Activated CD4-positive, alpha-beta T cell treated with anti-CD3 and anti-CD28 coated beads for 36 hours (primary cell): ENCODE measurements at regions of chr9 and their contacts with region 1.

Region 1: GRCh38 chr9:36995927-36996705 is 38.0 kb downstream of the PAX5 start:
- DNase-seq: peak; percentile 79
- ATAC-seq: peak; percentile 75
- H3K4me3 Mint-ChIP-seq: no peak overlapping the region
- H3K27ac Mint-ChIP-seq: no peak overlapping the region
- H3K4me1 Mint-ChIP-seq: no peaks in the 10 kb centered on the region
- H3K27me3 Mint-ChIP-seq: peaks cover 15% of the 10 kb centered on the region

Region 2: GRCh38 chr9:37309136-37309535 is 313.0 kb after region 1 on chr9:
- CTCF ChIA-PET with region 1: interaction called, 5 read pairs
- POLR2A ChIA-PET with region 1: no interaction called
- intact Hi-C with region 1: loop called (anchors 1 to 5 kb)
- DNase-seq: peak; percentile 56
- ATAC-seq: peak; percentile 83
- H3K4me3 Mint-ChIP-seq: no peak overlapping the region
- H3K27ac Mint-ChIP-seq: peak overlapping the region; percentile 39
- H3K4me1 Mint-ChIP-seq: peaks cover 9% of the 10 kb centered on the region
- H3K27me3 Mint-ChIP-seq: no peaks in the 10 kb centered on the region

Region 3: GRCh38 chr9:37329576-37329975 is 333.5 kb after region 1 on chr9:
- CTCF ChIA-PET with region 1: interaction called, 12 read pairs
- POLR2A ChIA-PET with region 1: interaction called, 3 read pairs
- intact Hi-C with region 1: loop called (anchors 1 kb)
- DNase-seq: peak; percentile 14
- ATAC-seq: no peak
- H3K4me3 Mint-ChIP-seq: no peak overlapping the region
- H3K27ac Mint-ChIP-seq: no peak overlapping the region
- H3K4me1 Mint-ChIP-seq: no peaks in the 10 kb centered on the region
- H3K27me3 Mint-ChIP-seq: no peaks in the 10 kb centered on the region

Region 4: GRCh38 chr9:37364751-37365360 is 368.7 kb after region 1 on chr9:
- CTCF ChIA-PET with region 1: interaction called, 4 read pairs
- POLR2A ChIA-PET with region 1: no interaction called
- intact Hi-C with region 1: loop called (anchors 1 to 10 kb)
- DNase-seq: peak; percentile 56
- ATAC-seq: peak; percentile 73
- H3K4me3 Mint-ChIP-seq: no peak overlapping the region
- H3K27ac Mint-ChIP-seq: no peak overlapping the region
- H3K4me1 Mint-ChIP-seq: no peaks in the 10 kb centered on the region
- H3K27me3 Mint-ChIP-seq: no peaks in the 10 kb centered on the region

Region 5: DNA sequence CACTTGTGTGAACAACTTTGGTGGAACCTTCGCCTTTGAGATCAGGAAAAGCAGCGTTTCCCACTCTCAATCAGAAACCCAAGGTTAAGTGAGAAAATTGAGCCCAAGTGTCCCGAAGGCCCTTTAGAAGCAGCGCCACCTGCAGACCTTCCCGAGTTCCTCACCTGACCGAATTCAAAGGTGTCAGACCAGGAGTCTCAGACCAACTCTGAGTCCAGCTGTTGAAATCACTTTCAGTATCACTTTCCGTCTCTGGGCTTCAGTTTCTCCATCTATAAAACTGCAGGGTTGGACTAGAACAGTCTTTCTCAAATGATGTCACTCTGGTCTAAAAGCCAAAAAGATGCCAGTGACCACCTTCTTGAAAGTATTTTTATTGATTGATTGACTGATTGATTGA is 394.6 kb after region 1 on chr9:
- CTCF ChIA-PET with region 1: interaction called, 4 read pairs
- POLR2A ChIA-PET with region 1: no interaction called
- intact Hi-C with region 1: loop called (anchors 1 kb)
- DNase-seq: peak; percentile 67
- ATAC-seq: no peak
- H3K4me3 Mint-ChIP-seq: no peak overlapping the region
- H3K27ac Mint-ChIP-seq: no peak overlapping the region
- H3K4me1 Mint-ChIP-seq: no peaks in the 10 kb centered on the region
- H3K27me3 Mint-ChIP-seq: no peaks in the 10 kb centered on the region